GM12878 (cell line): ENCODE measurements at regions of chr9 and their contacts with region 1.

Region 1: GRCh38 chr9:94860968-94861871 is 134.7 kb downstream of the AOPEP start:
- DNase-seq: peak; percentile 92
- ATAC-seq: peak; percentile 93
- H3K4me3 ChIP-seq: 0 out of 2 replicates have a peak overlapping the region, but pooled peaks have one; percentile 30
- H3K27ac ChIP-seq: peak overlapping the region; percentile 92
- H3K4me1 ChIP-seq: peaks cover 26% of the 10 kb centered on the region
- H3K27me3 ChIP-seq: no peaks in the 10 kb centered on the region
- CTCF ChIP-seq: no peak
- EP300 ChIP-seq: peak; percentile 97 to 99
- POLR2A ChIP-seq: peak; percentile 55; the same call in 1 of the 2 replicates
- RAD21 ChIP-seq: peak; percentile 25

Region 2: GRCh38 chr9:94663140-94663539 is 198.1 kb before region 1 on chr9:
- CTCF ChIA-PET with region 1: no interaction called
- POLR2A ChIA-PET with region 1: no interaction called
- RAD21 ChIA-PET with region 1: no interaction called
- SMC1A ChIA-PET with region 1: no interaction called
- in situ Hi-C with region 1: no loop called
- intact Hi-C with region 1: no loop called
- DNase-seq: no peak
- ATAC-seq: no peak
- H3K4me3 ChIP-seq: no peak overlapping the region
- H3K27ac ChIP-seq: no peak overlapping the region
- H3K4me1 ChIP-seq: no peaks in the 10 kb centered on the region
- H3K27me3 ChIP-seq: no peaks in the 10 kb centered on the region; a peak in 1 of 4 replicates
- CTCF ChIP-seq: no peak
- EP300 ChIP-seq: no peak
- POLR2A ChIP-seq: no peak
- RAD21 ChIP-seq: no peak

Region 3: DNA sequence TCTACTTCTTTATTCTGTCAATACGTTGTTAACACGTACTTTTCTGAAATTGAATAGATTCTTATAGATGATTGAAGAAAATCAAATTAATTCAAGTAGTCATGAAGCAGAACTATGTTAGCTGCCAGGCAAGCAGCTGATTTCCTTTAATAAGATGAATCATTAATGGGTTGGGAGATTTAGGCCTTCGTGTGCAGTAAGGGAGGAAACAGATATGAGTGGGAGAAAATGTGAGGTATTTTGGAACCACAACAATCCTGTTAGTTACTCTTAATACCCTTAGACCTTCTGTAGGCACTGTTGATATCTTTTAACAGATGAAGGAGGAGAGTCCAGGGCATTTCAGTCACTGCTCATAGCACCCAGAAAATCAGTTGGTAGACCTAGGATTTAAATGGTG is 13.7 kb before region 1 on chr9:
- CTCF ChIA-PET with region 1: interaction called, 3 read pairs
- POLR2A ChIA-PET with region 1: no interaction called
- RAD21 ChIA-PET with region 1: interaction called, 3 read pairs
- SMC1A ChIA-PET with region 1: interaction called, 10 read pairs
- in situ Hi-C with region 1: no loop called
- intact Hi-C with region 1: no loop called
- DNase-seq: no peak
- ATAC-seq: peak; percentile 28; the same call in 1 of the 3 replicates
- H3K4me3 ChIP-seq: no peak overlapping the region
- H3K27ac ChIP-seq: no peak overlapping the region
- H3K4me1 ChIP-seq: no peaks in the 10 kb centered on the region
- H3K27me3 ChIP-seq: no peaks in the 10 kb centered on the region
- CTCF ChIP-seq: no peak
- EP300 ChIP-seq: no peak
- POLR2A ChIP-seq: no peak
- RAD21 ChIP-seq: no peak

Region 4: DNA sequence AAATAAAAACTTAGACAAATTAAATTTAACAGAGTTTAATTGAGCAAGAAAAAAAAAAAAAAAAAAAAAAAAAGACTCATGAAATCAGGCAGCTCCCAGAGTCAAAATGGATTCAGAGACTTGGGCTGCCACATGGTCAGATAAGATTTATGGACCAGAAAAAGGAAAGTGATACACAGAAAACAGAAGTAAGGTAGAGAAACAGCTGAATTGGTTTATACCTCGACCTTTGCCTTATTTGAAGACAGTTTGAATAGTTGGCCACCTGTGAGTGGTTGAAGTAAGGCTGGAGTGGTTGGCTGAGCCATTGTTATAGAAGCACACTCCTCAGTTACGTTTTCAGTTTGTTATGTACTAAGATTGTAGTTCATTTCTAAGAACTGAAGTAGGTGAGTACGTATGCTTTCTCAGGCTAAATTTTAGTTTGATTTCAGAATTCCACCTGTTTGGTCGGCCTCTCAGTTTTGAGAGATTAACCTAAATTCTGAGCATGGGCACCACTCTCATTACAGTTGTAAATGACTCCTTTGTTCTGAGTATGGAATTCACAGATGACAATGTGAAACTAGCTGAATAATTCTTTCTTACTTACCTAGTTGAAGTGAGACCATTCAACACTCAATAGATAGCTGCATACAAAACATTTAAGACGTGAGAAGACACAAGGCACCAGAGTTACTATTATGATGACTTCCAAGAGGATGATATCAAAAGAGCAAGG is 14.2 kb after region 1 on chr9:
- CTCF ChIA-PET with region 1: interaction called, 4 read pairs
- POLR2A ChIA-PET with region 1: interaction called, 5 read pairs
- RAD21 ChIA-PET with region 1: interaction called, 6 read pairs
- SMC1A ChIA-PET with region 1: interaction called, 11 read pairs
- in situ Hi-C with region 1: no loop called
- intact Hi-C with region 1: loop called (anchors 2 kb)
- DNase-seq: peak; percentile 52
- ATAC-seq: peak; percentile 96
- H3K4me3 ChIP-seq: peak overlapping the region; percentile 23; the same call in 1 of the 2 replicates
- H3K27ac ChIP-seq: peak overlapping the region; percentile 90
- H3K4me1 ChIP-seq: peaks cover 17% of the 10 kb centered on the region
- H3K27me3 ChIP-seq: no peaks in the 10 kb centered on the region
- CTCF ChIP-seq: no peak
- EP300 ChIP-seq: 0 out of 4 replicates have a peak, but pooled peaks of 1 of the 2 experiments have one; percentile 34
- POLR2A ChIP-seq: no peak
- RAD21 ChIP-seq: no peak